Colonic mucosa (tissue), 4 donors: ENCODE measurements at regions of chr16 and their contacts with region 1.

Region 1: DNA sequence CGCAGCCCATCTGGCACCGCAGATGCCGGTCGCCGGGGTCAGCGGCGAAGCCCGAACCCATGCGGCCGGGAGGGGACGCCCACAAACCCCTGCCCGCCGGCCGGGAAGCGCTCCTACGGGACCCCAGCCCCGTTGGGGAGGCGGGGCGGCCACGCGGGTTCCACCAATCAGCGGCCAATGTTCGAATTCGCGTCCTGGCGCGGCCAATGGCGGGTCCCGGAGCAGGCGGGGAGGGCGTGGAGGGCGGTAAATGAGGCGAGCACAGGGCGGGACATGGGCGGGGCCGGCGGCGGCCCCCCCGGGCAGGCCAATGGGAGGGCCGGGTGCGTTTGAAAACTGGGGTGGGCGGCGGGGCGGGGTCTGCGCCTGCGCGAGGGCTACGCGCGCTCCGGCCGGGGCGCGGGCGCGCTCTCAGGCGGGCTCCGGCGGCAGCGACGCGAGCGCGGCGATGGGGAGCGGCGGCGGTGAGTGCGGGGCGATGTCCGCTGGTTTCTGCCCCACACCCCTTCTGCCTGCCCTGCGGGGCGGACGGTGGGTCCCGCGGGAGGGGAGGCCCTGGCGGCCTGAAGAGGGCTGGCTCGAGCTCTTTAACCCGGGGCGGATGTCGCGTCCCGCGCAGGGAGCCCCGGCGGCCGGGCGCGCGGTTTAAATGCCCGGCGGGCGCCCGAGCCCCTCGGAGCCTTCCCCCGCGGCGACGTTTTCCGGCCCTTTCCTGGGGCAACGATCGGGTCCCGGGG is at the start of gene CCNF:
- DNase-seq: peak; percentile 98
- H3K4me3 ChIP-seq: peak within 1 kb of the TSS; percentile 81
- H3K27ac ChIP-seq: peak within 1 kb of the TSS; percentile 49
- H3K4me1 ChIP-seq: peaks cover 7% of the 10 kb centered on the region
- H3K27me3 ChIP-seq: no peaks in the 10 kb centered on the region
- CTCF ChIP-seq: no peak
- total RNA-seq, gene CCNF: 8.6 to 38.2 TPM

Region 2: DNA sequence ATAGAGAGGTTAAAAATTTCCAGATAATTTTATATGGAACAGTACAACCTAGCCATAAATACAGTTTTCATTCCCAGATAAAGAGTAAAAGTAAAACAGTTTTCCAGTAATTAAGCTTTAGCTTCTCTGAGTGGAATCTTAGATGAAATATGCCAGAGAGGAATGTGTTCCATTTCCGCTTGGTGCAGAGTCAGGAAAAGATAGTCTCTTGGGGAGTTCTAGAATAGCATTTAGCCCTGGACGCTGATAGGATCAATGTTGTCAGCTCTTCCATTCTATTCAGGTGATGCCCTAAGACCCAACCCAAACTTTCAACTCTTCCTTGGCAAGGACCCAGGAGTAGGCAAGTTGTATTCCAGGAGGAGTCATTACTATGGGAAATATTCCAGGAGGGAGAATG is 57.8 kb before region 1 on chr16:
- intact Hi-C with region 1: no loop called
- DNase-seq: no peak
- H3K4me3 ChIP-seq: no peak overlapping the region
- H3K27ac ChIP-seq: no peak overlapping the region
- H3K4me1 ChIP-seq: no peaks in the 10 kb centered on the region
- H3K27me3 ChIP-seq: no peaks in the 10 kb centered on the region
- CTCF ChIP-seq: no peak

Region 3: DNA sequence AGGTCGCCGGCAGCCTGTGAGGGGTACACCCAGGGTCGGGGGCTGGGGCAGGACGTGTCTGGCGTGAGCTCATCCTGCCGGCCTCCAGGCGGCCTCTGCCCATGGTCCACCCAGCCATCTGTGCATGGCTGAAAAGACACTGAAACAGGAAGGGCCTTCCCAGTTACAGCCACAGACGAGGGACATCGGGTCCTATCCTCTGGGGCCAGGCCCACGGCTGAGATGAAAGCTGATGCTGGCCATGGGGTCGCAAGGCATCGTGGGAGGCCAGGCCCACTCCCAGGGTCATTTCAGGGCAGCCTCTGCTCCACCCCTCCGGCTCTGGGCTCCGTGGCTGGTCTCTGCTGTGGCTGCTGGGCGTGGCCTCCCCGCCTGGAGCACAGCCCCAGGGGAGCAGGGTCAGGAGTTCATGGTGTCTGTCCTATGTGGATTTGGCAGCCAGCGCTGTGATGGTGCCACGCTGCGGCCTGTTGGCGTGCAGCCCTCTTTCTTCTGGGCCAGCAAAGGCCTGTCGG is 68.0 kb after region 1 on chr16:
- intact Hi-C with region 1: loop called (anchors 5 kb)
- DNase-seq: no peak
- H3K4me3 ChIP-seq: no peak overlapping the region
- H3K27ac ChIP-seq: no peak overlapping the region
- H3K4me1 ChIP-seq: peaks cover 3% of the 10 kb centered on the region
- H3K27me3 ChIP-seq: no peaks in the 10 kb centered on the region
- CTCF ChIP-seq: no peak